Mammary epithelial cell (primary cell): ENCODE measurements at regions of chr13 and their contacts with region 1.

Region 1: GRCh38 chr13:79936368-79937136 is 404.4 kb downstream of the SPRY2 start:
- DNase-seq: peak; percentile 98
- H3K4me3 ChIP-seq: no peak overlapping the region
- H3K27ac ChIP-seq: peak overlapping the region; percentile 89
- H3K4me1 ChIP-seq: peaks cover 40% of the 10 kb centered on the region
- H3K27me3 ChIP-seq: no peaks in the 10 kb centered on the region
- CTCF ChIP-seq: no peak

Region 2: DNA sequence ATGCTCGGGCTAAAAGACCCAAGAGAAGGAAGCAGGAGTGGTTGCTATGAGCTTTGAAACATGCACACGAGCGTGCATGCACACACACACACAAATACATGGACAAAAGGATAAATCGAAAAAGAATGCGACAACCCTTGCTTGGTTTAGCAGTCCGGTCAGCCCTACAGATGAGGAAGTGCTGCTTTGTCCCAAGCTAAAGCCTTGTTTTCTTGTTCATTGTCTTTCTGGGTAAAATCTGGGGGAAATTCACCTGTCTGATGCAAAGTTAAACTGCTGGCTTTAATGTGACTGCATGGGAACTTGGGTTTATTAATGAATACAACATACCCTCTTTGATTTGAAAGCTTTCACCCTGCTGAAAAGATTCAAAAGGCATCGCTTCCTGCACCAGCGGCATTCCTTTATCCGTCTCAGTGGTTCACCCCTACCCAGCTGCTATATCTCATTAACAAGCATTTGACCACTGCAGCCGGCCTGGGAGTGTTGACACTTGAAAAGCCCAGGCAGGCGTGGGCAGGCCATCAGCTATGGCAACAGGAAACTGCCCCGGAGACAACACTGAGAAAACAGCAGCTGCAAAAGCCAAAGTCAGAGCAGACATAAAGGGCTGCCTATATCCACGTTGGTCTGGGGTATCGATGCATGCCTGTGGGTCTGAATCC is 153.9 kb before region 1 on chr13:
- CTCF ChIA-PET with region 1: no interaction called
- dilution Hi-C with region 1: no loop called
- in situ Hi-C with region 1: no loop called
- intact Hi-C with region 1: loop called (anchors 1 kb)
- DNase-seq: peak; percentile 85
- H3K4me3 ChIP-seq: no peak overlapping the region
- H3K27ac ChIP-seq: peak overlapping the region; percentile 49
- H3K4me1 ChIP-seq: peaks cover 30% of the 10 kb centered on the region
- H3K27me3 ChIP-seq: no peaks in the 10 kb centered on the region
- CTCF ChIP-seq: no peak

Region 3: GRCh38 chr13:79988573-79988972 is 52.0 kb after region 1 on chr13:
- CTCF ChIA-PET with region 1: no interaction called
- dilution Hi-C with region 1: no loop called
- in situ Hi-C with region 1: no loop called
- intact Hi-C with region 1: loop called (anchors 1 kb)
- DNase-seq: peak; percentile 74
- H3K4me3 ChIP-seq: no peak overlapping the region
- H3K27ac ChIP-seq: peak overlapping the region; percentile 99
- H3K4me1 ChIP-seq: peaks cover 49% of the 10 kb centered on the region
- H3K27me3 ChIP-seq: no peaks in the 10 kb centered on the region
- CTCF ChIP-seq: no peak